ENCODE measurements at regions of chr6 and their contacts with region 1.

Region 1: DNA sequence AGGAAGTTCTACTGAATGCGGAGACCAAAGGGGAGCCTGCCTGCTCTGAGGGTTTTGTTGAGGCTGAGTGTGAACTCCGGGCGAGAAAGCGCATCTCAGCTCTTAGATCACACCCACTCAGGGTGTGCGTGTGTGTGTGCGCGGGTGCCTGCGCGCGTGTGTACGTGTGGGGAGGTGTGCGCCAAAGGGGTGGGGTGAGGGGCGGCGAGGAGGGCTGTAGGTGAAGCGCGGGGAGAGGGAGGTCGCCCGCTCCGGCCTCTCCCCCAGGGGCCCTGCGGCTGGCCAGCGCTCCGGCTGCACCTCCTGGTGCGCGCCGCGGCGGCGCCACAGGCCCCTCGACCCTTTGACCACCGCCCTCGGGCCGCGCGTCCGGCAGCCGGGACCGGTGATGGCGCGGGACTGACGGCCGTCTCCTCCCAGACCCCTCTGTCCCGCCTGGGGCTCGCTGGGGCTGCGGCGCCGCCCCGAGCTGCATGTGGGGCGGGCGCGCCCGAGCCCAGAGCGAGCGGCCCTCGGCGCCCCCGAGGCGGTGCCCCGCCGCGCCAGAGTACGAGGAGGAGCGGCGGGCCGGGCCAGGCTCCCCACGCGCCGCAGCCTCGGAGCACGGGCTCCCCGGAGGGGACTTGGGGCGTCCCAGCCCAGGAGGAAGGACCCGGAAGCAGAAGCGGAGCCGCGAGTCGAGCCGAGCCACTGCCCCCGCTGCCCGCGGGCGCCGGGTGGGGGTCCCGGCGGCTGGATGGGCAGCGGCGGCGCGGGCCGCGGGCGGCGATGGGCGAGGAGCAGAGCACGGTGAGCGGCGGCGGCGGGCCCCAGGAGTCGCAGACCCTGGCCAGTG is at the start of gene RNF217:
- DNase-seq: peak; percentile 42
- H3K4me3 ChIP-seq: peak within 1 kb of the TSS; percentile 75 to 88
- H3K27ac ChIP-seq: peak within 1 kb of the TSS; percentile 89 to 93
- H3K4me1 ChIP-seq: no peaks in the 10 kb centered on the region
- H3K27me3 ChIP-seq: no peaks in the 10 kb centered on the region
- CTCF ChIP-seq: peak in 1 of 4 experiments; percentile 12
- POLR2A ChIP-seq: peak; percentile 35
- total RNA-seq, gene RNF217: 12.1 to 24.3 TPM

Region 2: GRCh38 chr6:125099211-125100073 is 137.4 kb after region 1 on chr6:
- intact Hi-C with region 1: loop called (anchors 5 kb)
- DNase-seq: peak; percentile 24
- H3K4me3 ChIP-seq: peak overlapping the region; percentile 35 to 45
- H3K27ac ChIP-seq: no peak overlapping the region
- H3K4me1 ChIP-seq: no peaks in the 10 kb centered on the region
- H3K27me3 ChIP-seq: no peaks in the 10 kb centered on the region
- CTCF ChIP-seq: no peak
- POLR2A ChIP-seq: no peak

Measured in prostate gland (tissue), 2 donors.